ENCODE measurements at regions of chr5 and their contacts with region 1.

Region 1: DNA sequence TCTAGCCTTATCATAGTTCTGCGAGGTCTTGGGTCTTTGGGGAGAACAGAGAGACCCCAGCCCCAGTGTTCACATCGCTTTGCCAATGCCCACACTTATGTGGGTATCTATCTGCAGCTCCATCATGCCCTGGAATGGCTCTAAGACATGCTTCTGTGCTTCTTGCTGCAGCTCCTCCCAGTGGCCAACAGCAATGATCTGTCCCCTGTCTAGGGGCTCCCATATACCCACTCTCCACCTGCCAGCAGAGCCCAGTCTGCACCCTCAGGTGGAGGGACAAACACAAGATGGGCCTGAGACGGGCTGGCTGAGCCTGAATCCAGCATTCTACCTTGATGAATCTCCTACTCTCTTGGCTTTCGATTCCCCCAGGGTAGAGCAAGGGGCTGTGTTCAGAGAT is 14.6 kb upstream of the DAP start:
- DNase-seq: no peak
- H3K4me3 Mint-ChIP-seq: no peak overlapping the region
- H3K27ac Mint-ChIP-seq: no peak overlapping the region
- H3K4me1 Mint-ChIP-seq: no peaks in the 10 kb centered on the region
- H3K27me3 Mint-ChIP-seq: peaks cover 4% of the 10 kb centered on the region

Region 2: GRCh38 chr5:10701567-10702039 is 74.0 kb before region 1 on chr5:
- CTCF ChIA-PET with region 1: interaction called, 6 read pairs
- intact Hi-C with region 1: loop called (anchors 5 kb)
- DNase-seq: peak; percentile 37
- H3K4me3 Mint-ChIP-seq: no peak overlapping the region
- H3K27ac Mint-ChIP-seq: no peak overlapping the region
- H3K4me1 Mint-ChIP-seq: peaks cover 47% of the 10 kb centered on the region
- H3K27me3 Mint-ChIP-seq: no peaks in the 10 kb centered on the region